Caco-2 (cell line): ENCODE measurements at regions of chr17 and their contacts with region 1.

Region 1: GRCh38 chr17:67575325-67575724 is 142.4 kb upstream of the NOL11 start:
- DNase-seq: peak in 1 of 2 experiments; percentile 40
- H3K4me3 ChIP-seq: no peak overlapping the region
- H3K4me3 Mint-ChIP-seq: no peak overlapping the region
- H3K27ac Mint-ChIP-seq: no peak overlapping the region
- H3K4me1 ChIP-seq: no peaks in the 10 kb centered on the region
- H3K4me1 Mint-ChIP-seq: peaks cover 5% of the 10 kb centered on the region
- H3K27me3 ChIP-seq: no peaks in the 10 kb centered on the region
- H3K27me3 Mint-ChIP-seq: peaks cover 7% of the 10 kb centered on the region
- CTCF ChIP-seq: peak; percentile 11 to 44

Region 2: GRCh38 chr17:67411397-67411796 is 163.9 kb before region 1 on chr17:
- CTCF ChIA-PET with region 1: no interaction called
- POLR2A ChIA-PET with region 1: no interaction called
- intact Hi-C with region 1: no loop called
- DNase-seq: no peak
- H3K4me3 ChIP-seq: no peak overlapping the region
- H3K4me3 Mint-ChIP-seq: no peak overlapping the region
- H3K27ac Mint-ChIP-seq: no peak overlapping the region
- H3K4me1 ChIP-seq: no peaks in the 10 kb centered on the region
- H3K4me1 Mint-ChIP-seq: no peaks in the 10 kb centered on the region
- H3K27me3 ChIP-seq: no peaks in the 10 kb centered on the region
- H3K27me3 Mint-ChIP-seq: no peaks in the 10 kb centered on the region
- CTCF ChIP-seq: no peak

Region 3: GRCh38 chr17:67602956-67603355 is 27.6 kb after region 1 on chr17:
- CTCF ChIA-PET with region 1: no interaction called
- POLR2A ChIA-PET with region 1: no interaction called
- intact Hi-C with region 1: loop called (anchors 1 kb)
- DNase-seq: peak; percentile 55 to 61
- H3K4me3 ChIP-seq: no peak overlapping the region
- H3K4me3 Mint-ChIP-seq: no peak overlapping the region
- H3K27ac Mint-ChIP-seq: no peak overlapping the region
- H3K4me1 ChIP-seq: no peaks in the 10 kb centered on the region
- H3K4me1 Mint-ChIP-seq: peaks cover 7% of the 10 kb centered on the region
- H3K27me3 ChIP-seq: no peaks in the 10 kb centered on the region
- H3K27me3 Mint-ChIP-seq: peaks cover 5% of the 10 kb centered on the region
- CTCF ChIP-seq: peak; percentile 46 to 74

Region 4: DNA sequence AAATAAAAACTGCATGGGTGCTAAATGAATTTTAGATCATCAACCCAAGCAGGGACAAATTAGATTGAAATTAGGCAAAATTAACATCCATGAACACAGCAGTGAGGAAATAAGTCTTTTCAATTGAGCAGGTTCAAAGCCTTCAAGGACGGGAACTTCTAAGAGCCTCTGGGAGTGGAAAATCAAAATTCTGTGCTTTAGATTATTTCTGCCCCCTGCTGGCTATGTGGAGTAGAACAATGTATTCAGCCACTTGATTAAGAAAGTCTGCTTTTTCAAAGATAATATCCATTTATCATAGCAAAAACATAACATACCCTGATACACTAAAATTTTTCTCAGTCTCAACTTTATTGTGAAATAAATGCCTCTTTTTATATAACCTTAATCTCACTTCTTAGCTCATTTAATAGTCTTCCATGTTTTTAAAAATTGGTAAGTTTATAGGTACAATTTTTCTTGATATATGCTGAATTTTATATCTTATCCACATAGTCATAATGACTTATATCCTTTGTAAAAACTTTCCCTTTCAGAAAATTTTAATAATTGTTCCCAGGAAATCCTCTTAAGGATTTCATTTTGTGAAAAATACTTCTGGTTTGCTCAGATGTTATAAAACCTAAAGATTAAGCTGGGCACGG is 114.3 kb after region 1 on chr17:
- CTCF ChIA-PET with region 1: no interaction called
- POLR2A ChIA-PET with region 1: no interaction called
- intact Hi-C with region 1: loop called (anchors 1 kb)
- DNase-seq: peak in 1 of 2 experiments; percentile 68
- H3K4me3 ChIP-seq: no peak overlapping the region
- H3K4me3 Mint-ChIP-seq: no peak overlapping the region
- H3K27ac Mint-ChIP-seq: no peak overlapping the region
- H3K4me1 ChIP-seq: no peaks in the 10 kb centered on the region
- H3K4me1 Mint-ChIP-seq: no peaks in the 10 kb centered on the region
- H3K27me3 ChIP-seq: no peaks in the 10 kb centered on the region
- H3K27me3 Mint-ChIP-seq: peaks cover 2% of the 10 kb centered on the region
- CTCF ChIP-seq: peak; percentile 67 to 76

Region 5: DNA sequence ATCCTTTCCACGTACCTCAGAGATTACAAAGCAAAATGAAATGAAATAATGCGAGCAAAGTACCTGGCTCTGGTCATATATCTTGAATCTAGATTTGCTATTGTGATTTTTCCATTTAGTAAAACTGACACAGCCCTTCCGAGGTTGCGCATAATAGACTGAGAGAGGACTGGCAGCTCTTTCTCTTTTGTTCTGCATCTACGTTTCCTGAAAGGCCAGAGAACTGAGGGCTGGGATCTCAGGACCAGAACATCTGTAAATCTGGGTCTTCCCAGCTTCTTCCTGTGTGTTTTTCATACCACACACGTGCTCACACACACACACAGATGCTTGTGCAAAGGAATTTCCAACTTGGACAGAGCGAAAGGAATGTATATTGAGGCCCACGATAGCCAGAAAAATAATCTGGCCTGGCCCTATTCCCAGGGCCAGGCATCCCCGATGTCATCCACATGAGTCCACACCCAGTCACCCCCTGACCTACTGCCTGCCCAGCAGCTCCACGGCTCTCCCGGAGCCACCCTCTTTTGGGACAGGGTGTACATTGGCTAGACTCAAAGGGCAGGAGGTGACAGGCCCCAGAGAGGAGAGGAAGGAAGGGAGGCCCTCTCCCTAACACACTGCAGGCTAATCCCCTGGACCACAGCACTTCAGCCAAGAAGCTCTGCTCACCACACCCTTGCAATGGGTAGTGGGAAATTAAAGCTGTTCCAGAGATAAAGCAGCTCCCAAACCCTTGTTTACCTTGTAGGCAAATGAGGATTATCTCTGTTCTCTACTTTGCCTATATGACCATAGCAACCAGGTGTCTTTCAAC is 184.2 kb after region 1 on chr17:
- CTCF ChIA-PET with region 1: no interaction called
- POLR2A ChIA-PET with region 1: no interaction called
- intact Hi-C with region 1: no loop called
- DNase-seq: no peak
- H3K4me3 ChIP-seq: no peak overlapping the region
- H3K4me3 Mint-ChIP-seq: no peak overlapping the region
- H3K27ac Mint-ChIP-seq: no peak overlapping the region
- H3K4me1 ChIP-seq: peaks cover 5% of the 10 kb centered on the region; the same call in 1 of the 2 replicates
- H3K4me1 Mint-ChIP-seq: peaks cover 6% of the 10 kb centered on the region
- H3K27me3 ChIP-seq: no peaks in the 10 kb centered on the region
- H3K27me3 Mint-ChIP-seq: no peaks in the 10 kb centered on the region
- CTCF ChIP-seq: no peak